Activated CD4-positive, alpha-beta T cell treated with anti-CD3 and anti-CD28 coated beads for 36 hours (primary cell): ENCODE measurements at regions of chr6 and their contacts with region 1.

Region 1: GRCh38 chr6:137589067-137589848 is 95.1 kb upstream of the OLIG3 start:
- DNase-seq: peak; percentile 71
- ATAC-seq: peak; percentile 100
- H3K4me3 Mint-ChIP-seq: no peak overlapping the region
- H3K27ac Mint-ChIP-seq: no peak overlapping the region
- H3K4me1 Mint-ChIP-seq: peaks cover 6% of the 10 kb centered on the region
- H3K27me3 Mint-ChIP-seq: peaks cover 9% of the 10 kb centered on the region

Region 2: DNA sequence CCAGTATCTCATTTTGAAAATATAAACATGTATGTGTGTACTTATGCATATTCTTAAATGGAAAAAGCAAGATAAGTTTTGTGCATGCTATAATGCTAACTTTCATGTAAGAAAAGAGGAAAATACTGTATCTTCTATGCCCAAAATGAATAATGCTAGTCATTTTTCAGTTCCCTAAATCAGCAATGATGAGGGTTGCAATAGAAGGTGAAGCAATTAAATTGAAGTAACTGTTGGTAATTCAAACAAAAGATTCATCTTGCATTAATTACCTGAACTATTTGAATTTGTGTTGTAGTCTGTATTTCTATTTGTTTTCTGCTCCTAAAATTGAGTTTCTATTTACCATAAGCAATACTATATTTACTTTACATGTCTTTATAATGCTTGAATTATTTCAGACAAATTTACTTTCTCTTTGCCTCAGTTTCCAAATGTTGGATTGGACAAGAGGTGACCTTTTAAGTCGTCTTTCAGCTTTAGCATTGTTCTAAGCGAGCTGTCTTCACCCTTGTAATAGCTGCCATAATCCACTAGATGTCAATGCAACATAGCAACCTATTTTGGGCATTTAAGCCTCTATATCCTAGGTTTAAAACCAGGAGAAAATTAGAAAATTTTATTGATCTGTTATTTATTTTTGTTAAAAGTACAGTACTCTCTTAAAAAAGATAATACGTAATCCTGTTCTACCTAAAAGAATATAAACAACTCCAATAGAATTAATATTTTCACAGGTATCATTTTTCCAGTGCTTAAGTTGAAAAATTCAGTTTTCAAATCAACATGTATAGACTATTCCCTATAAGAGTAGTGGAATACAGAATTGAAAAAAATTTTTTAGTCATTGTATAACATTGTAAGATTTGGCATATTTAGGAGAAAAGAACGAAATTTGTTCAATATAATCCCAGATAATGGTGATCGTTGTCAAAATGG is 317.7 kb before region 1 on chr6:
- CTCF ChIA-PET with region 1: interaction called, 3 read pairs
- POLR2A ChIA-PET with region 1: no interaction called
- intact Hi-C with region 1: loop called in 1 of 2 experiments (anchors 1 kb)
- DNase-seq: no peak
- ATAC-seq: peak; percentile 51
- H3K4me3 Mint-ChIP-seq: no peak overlapping the region
- H3K27ac Mint-ChIP-seq: no peak overlapping the region
- H3K4me1 Mint-ChIP-seq: peaks cover 3% of the 10 kb centered on the region
- H3K27me3 Mint-ChIP-seq: peaks cover 8% of the 10 kb centered on the region

Region 3: DNA sequence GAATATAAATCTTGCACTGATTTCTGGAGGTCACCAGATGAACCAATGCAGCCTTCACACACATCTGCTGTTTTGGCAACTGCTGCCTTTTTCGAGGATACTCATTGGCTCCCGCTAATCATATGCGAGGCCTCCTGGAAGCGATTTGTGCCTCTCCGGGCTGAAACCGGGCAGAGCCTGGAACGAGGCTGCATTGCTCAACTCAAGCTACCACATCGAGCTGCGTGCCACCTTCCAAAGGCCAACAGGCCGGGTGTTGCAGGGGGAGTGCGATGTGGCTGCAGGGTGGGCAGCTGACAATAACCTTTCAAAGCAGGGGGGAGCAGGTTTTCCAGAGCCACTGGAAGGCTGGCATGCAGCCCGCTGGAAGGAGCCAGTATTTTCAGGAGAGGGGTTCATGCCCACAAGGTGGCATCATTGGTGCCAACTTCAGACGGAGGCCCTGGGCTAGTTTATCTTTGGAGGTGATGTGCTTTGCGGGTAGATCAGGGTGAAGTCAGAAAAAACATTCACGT is 247.5 kb before region 1 on chr6:
- CTCF ChIA-PET with region 1: no interaction called
- POLR2A ChIA-PET with region 1: no interaction called
- intact Hi-C with region 1: loop called in 1 of 2 experiments (anchors 5 kb)
- DNase-seq: peak; percentile 60
- ATAC-seq: peak; percentile 47
- H3K4me3 Mint-ChIP-seq: peak overlapping the region; percentile 19
- H3K27ac Mint-ChIP-seq: no peak overlapping the region
- H3K4me1 Mint-ChIP-seq: peaks cover 7% of the 10 kb centered on the region
- H3K27me3 Mint-ChIP-seq: peaks cover 7% of the 10 kb centered on the region

Region 4: GRCh38 chr6:137389150-137389704 is 200.0 kb before region 1 on chr6:
- CTCF ChIA-PET with region 1: no interaction called
- POLR2A ChIA-PET with region 1: no interaction called
- intact Hi-C with region 1: no loop called
- DNase-seq: peak; percentile 88
- ATAC-seq: peak; percentile 99
- H3K4me3 Mint-ChIP-seq: peak overlapping the region; percentile 1
- H3K27ac Mint-ChIP-seq: peak overlapping the region; percentile 64
- H3K4me1 Mint-ChIP-seq: peaks cover 40% of the 10 kb centered on the region
- H3K27me3 Mint-ChIP-seq: no peaks in the 10 kb centered on the region

Region 5: DNA sequence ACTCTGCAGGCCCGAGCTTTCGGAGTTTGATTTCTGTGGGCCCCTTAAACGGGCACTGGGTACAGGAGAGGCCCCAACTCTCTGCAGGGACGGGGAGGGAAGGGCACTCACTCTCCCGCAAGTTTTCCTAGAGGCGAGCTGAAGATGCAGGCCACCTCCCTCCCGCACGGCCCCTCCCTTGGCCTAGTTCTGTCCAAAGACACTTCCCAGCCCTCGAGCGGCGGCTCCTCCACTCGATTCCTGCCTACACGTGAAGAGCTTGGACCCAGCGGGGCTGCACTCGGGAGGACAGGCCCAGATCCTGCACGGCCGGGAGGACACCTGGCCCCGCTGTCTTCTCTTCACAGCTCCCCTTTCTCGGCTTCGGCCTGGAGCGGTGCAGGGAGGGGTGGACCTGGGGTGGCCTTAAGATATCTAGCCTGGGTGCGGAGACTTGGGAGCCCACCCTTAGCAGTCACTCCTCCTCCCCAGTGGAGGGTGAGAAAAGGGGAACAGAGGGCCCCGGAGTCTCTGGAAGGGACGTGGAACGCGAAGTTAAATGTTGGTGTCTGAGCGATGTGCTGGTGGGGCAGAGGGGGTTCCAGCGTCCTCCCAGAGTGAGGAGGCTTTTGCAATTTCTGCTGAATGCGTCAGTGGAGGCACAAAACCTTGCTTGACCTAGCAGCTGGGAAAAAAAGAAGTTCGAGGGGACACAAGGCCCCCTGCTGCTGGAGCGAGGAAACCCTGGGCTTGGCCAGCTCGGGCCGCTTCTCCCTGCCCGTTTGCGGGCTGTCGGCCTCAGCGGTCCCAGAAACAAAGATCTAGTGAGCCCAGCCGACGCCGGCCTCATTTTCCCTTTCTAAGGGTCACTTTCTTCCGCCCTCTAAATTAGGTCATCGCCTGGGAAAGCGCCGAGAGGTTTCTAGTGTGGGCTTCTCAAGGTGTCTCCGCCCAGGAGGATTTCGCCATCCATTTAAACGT is 99.9 kb before region 1 on chr6:
- CTCF ChIA-PET with region 1: no interaction called
- POLR2A ChIA-PET with region 1: no interaction called
- intact Hi-C with region 1: loop called in 1 of 2 experiments (anchors 5 kb)
- DNase-seq: no peak
- ATAC-seq: no peak
- H3K4me3 Mint-ChIP-seq: no peak overlapping the region
- H3K27ac Mint-ChIP-seq: no peak overlapping the region
- H3K4me1 Mint-ChIP-seq: peaks cover 46% of the 10 kb centered on the region
- H3K27me3 Mint-ChIP-seq: peaks cover 78% of the 10 kb centered on the region

Region 6: GRCh38 chr6:137571854-137572253 is 17.4 kb before region 1 on chr6:
- CTCF ChIA-PET with region 1: interaction called, 12 read pairs
- POLR2A ChIA-PET with region 1: no interaction called
- intact Hi-C with region 1: no loop called
- DNase-seq: peak; percentile 77
- ATAC-seq: peak; percentile 44
- H3K4me3 Mint-ChIP-seq: no peak overlapping the region
- H3K27ac Mint-ChIP-seq: no peak overlapping the region
- H3K4me1 Mint-ChIP-seq: no peaks in the 10 kb centered on the region
- H3K27me3 Mint-ChIP-seq: peaks cover 4% of the 10 kb centered on the region

Region 7: DNA sequence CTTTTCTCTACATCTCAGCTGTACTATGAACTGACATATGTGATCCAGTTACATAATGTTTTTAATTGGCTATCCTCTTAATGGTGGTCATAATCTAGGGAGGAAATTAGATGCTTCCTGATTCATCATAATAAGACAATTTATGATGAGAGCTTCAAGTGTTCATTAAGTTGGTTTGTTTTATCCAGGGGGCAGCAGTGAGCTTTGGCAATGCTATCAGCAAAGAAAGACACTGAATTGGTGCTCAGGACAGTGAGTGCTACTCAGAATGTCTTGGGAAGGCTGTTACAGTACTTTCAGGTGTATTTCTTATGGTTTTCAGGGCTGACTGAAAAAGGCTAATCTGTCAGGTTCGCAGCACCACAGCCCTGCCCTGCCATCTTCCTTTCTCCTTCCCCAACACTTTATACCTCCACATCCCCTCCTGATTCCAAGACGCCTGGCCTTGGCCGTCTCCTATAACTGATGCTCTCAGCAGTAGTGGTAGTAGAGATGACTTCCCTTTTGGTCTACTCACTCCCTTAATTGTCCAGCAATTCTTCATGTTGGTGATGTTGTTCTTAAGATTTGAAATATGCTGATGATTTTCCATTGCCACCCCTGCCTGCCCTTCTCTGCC is 210.8 kb after region 1 on chr6:
- CTCF ChIA-PET with region 1: no interaction called
- POLR2A ChIA-PET with region 1: no interaction called
- intact Hi-C with region 1: no loop called
- DNase-seq: peak; percentile 76
- ATAC-seq: peak; percentile 80
- H3K4me3 Mint-ChIP-seq: no peak overlapping the region
- H3K27ac Mint-ChIP-seq: peak overlapping the region; percentile 84
- H3K4me1 Mint-ChIP-seq: peaks cover 65% of the 10 kb centered on the region
- H3K27me3 Mint-ChIP-seq: no peaks in the 10 kb centered on the region

Region 8: GRCh38 chr6:137866914-137867684 is 277.8 kb after region 1 on chr6 and contains the start of gene TNFAIP3:
- CTCF ChIA-PET with region 1: no interaction called
- POLR2A ChIA-PET with region 1: no interaction called
- intact Hi-C with region 1: no loop called
- DNase-seq: peak; percentile 96
- ATAC-seq: peak; percentile 65
- H3K4me3 Mint-ChIP-seq: peak within 1 kb of the TSS; percentile 91
- H3K27ac Mint-ChIP-seq: peak within 1 kb of the TSS; percentile 99
- H3K4me1 Mint-ChIP-seq: peaks cover 32% of the 10 kb centered on the region
- H3K27me3 Mint-ChIP-seq: no peaks in the 10 kb centered on the region
- total RNA-seq, gene TNFAIP3: 284 to 371 TPM